Tibial artery (tissue), 4 donors: ENCODE measurements at regions of chr7 and their contacts with region 1.

Region 1: GRCh38 chr7:116271963-116272839 is 61.9 kb downstream of the TES start:
- DNase-seq: peak; percentile 64 to 78
- H3K4me3 ChIP-seq: peak overlapping the region in 1 of 2 donors; percentile 14
- H3K27ac ChIP-seq: peak overlapping the region; percentile 20 to 60
- H3K4me1 ChIP-seq: peaks cover 0 to 54% (median 20%) of the 10 kb centered on the region in 4 donors
- H3K27me3 ChIP-seq: no peaks in the 10 kb centered on the region
- CTCF ChIP-seq: no peak

Region 2: GRCh38 chr7:116316833-116317612 is 44.8 kb after region 1 on chr7:
- intact Hi-C with region 1: loop called (anchors 5 kb)
- DNase-seq: peak; percentile 77 to 84
- H3K4me3 ChIP-seq: peak overlapping the region; percentile 1 to 9
- H3K27ac ChIP-seq: peak overlapping the region; percentile 75 to 79
- H3K4me1 ChIP-seq: peaks cover 0 to 32% (median 16%) of the 10 kb centered on the region in 4 donors
- H3K27me3 ChIP-seq: no peaks in the 10 kb centered on the region
- CTCF ChIP-seq: no peak